ENCODE measurements at regions of chr17 and their contacts with region 1.

Region 1: DNA sequence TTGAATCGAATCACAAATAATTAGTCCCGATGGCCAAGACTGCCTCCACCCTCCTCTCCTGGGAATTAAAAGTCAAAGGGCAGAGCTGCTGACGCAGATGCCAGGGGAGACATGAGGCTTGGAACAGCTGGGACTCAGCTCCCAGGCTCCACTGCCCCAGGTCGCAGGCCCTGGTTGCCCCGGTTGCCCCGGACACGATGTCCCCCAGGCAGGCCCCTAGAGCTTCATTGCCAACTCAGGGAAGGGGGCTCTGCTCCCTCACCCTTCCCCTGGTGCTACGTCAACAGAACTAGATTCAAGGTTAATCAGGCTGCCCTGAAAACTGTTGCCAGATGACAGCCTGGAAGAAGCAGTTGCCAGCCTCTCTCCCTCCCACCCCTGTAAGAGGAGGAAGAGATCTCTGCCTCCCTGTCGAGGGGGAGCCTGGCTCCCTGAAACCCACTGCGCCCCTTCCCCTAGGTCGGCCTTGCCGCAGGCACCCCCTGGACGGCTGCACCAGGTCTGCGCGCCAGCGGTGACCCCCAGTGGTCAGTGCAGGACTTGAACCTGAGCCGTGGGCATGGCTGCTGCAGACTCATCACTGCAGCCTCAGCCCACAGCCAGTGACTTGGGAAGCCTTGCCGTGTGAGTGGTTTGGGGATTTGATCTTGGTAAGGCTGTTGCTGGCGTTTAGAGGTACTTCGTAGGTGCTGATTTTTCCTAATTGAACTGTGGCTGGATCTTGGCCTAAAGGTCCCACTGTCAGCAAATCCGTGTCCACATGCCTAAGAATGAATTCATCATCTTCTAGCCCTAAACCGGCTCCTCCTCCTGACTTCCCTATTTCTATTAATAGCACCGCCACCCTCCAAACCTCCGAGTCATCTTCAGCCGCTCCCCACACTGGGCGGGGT is 84.1 kb upstream of the TOB1 start:
- DNase-seq: peak; percentile 32 to 80 (median 54)
- ATAC-seq: peak; percentile 84
- H3K4me3 ChIP-seq: no peak overlapping the region
- H3K4me3 Mint-ChIP-seq: no peak overlapping the region
- H3K27ac ChIP-seq: no peak overlapping the region
- H3K27ac Mint-ChIP-seq: peak overlapping the region; percentile 42
- H3K4me1 ChIP-seq: peaks cover 33% of the 10 kb centered on the region
- H3K4me1 Mint-ChIP-seq: peaks cover 34% of the 10 kb centered on the region
- H3K27me3 ChIP-seq: no peaks in the 10 kb centered on the region
- H3K27me3 Mint-ChIP-seq: no peaks in the 10 kb centered on the region
- CTCF ChIP-seq: peak; percentile 68

Region 2: GRCh38 chr17:50909765-50910605 is 40.2 kb before region 1 on chr17:
- CTCF ChIA-PET with region 1: interaction called, 3 read pairs
- POLR2A ChIA-PET with region 1: interaction called, 16 read pairs
- intact Hi-C with region 1: loop called (anchors 5 kb)
- DNase-seq: peak; percentile 65 to 95 (median 80)
- ATAC-seq: peak; percentile 89
- H3K4me3 ChIP-seq: peak overlapping the region; percentile 4
- H3K4me3 Mint-ChIP-seq: peak overlapping the region; percentile 83
- H3K27ac ChIP-seq: peak overlapping the region; percentile 67 to 81
- H3K27ac Mint-ChIP-seq: peak overlapping the region; percentile 86
- H3K4me1 ChIP-seq: peaks cover 92% of the 10 kb centered on the region
- H3K4me1 Mint-ChIP-seq: peaks cover 64% of the 10 kb centered on the region
- H3K27me3 ChIP-seq: no peaks in the 10 kb centered on the region
- H3K27me3 Mint-ChIP-seq: no peaks in the 10 kb centered on the region
- CTCF ChIP-seq: peak; percentile 6

Region 3: GRCh38 chr17:51000835-51001638 is 50.8 kb after region 1 on chr17:
- CTCF ChIA-PET with region 1: no interaction called
- POLR2A ChIA-PET with region 1: no interaction called
- intact Hi-C with region 1: no loop called
- DNase-seq: peak in 5 of 14 experiments; percentile 2 to 80 (median 79)
- ATAC-seq: peak; percentile 93
- H3K4me3 ChIP-seq: no peak overlapping the region
- H3K4me3 Mint-ChIP-seq: no peak overlapping the region
- H3K27ac ChIP-seq: no peak overlapping the region
- H3K27ac Mint-ChIP-seq: no peak overlapping the region
- H3K4me1 ChIP-seq: no peaks in the 10 kb centered on the region
- H3K4me1 Mint-ChIP-seq: peaks cover 7% of the 10 kb centered on the region
- H3K27me3 ChIP-seq: no peaks in the 10 kb centered on the region
- H3K27me3 Mint-ChIP-seq: no peaks in the 10 kb centered on the region
- CTCF ChIP-seq: peak; percentile 73

Region 4: DNA sequence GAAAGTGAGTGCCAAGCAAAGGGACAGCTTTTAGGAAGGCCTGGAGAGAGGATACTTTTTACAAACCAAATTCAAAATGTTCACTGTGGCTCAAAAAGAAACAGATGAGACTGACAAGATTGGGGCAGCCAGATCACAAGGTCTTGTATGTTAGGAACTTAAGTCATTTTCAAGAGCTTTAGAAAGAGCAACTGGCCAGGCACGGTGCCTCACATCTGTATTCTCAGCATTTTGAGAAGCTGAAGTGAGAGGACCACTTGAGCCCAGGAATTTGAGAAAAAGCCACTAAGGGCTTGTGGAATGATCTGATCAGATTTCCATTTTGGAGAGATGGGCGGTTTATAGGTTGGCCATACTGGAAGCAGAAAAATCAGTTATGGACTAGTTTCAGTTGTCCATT is 153.2 kb after region 1 on chr17:
- CTCF ChIA-PET with region 1: no interaction called
- POLR2A ChIA-PET with region 1: no interaction called
- intact Hi-C with region 1: no loop called
- DNase-seq: no peak
- ATAC-seq: no peak
- H3K4me3 ChIP-seq: no peak overlapping the region
- H3K4me3 Mint-ChIP-seq: no peak overlapping the region
- H3K27ac ChIP-seq: no peak overlapping the region
- H3K27ac Mint-ChIP-seq: no peak overlapping the region
- H3K4me1 ChIP-seq: peaks cover 3% of the 10 kb centered on the region
- H3K4me1 Mint-ChIP-seq: peaks cover 22% of the 10 kb centered on the region
- H3K27me3 ChIP-seq: no peaks in the 10 kb centered on the region
- H3K27me3 Mint-ChIP-seq: no peaks in the 10 kb centered on the region
- CTCF ChIP-seq: no peak

Measured in CD4-positive, alpha-beta T cell (primary cell).